ENCODE measurements at regions of chr4 and their contacts with region 1.

Region 1: DNA sequence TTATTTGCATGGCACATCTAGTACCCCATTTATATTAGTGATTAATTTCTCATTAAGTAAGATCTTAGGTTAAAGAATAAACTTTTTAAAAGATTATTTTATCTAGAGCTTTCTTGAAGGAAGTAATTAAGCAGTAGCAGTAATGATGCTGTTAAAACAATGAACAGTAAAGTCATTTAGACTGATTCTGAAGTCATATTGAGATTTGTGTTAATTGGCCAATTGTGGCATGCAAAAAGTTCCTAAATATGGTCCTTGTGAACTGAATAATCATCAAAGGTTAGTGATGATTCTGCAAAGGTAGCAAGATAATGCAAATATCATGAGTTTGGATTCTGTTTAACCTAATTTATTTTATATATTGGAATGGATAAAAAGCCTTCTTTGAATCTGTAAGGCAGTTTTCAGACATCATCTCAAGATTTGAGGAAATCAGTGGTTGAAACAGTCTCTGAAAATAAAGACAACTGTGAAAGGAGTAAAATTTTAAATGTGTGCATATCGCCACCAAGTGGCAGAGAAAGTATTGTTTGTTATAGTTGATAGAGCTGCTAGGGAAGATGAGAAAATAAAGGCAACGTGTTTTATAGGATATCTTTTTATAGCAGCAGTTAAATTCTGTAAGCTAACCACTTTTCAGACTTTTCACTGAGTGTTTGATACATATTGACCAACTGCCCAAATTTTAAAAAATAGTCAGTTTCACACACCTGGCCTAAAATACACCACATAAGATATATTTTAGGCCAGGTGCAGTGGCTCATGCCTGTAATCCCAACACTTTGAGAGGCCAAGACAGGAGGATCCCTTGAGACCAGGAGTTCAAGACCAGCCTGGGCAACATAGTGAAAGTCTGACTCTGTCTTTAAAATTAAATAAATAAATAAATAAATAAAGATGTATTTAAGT is 79.6 kb downstream of the CCKAR start:
- DNase-seq: peak; percentile 68
- ATAC-seq: peak; percentile 21
- H3K4me3 ChIP-seq: no peak overlapping the region
- H3K4me3 Mint-ChIP-seq: no peak overlapping the region
- H3K27ac ChIP-seq: no peak overlapping the region
- H3K27ac Mint-ChIP-seq: no peak overlapping the region
- H3K4me1 ChIP-seq: no peaks in the 10 kb centered on the region
- H3K4me1 Mint-ChIP-seq: no peaks in the 10 kb centered on the region
- H3K27me3 ChIP-seq: no peaks in the 10 kb centered on the region
- H3K27me3 Mint-ChIP-seq: no peaks in the 10 kb centered on the region
- CTCF ChIP-seq: peak; percentile 81

Region 2: DNA sequence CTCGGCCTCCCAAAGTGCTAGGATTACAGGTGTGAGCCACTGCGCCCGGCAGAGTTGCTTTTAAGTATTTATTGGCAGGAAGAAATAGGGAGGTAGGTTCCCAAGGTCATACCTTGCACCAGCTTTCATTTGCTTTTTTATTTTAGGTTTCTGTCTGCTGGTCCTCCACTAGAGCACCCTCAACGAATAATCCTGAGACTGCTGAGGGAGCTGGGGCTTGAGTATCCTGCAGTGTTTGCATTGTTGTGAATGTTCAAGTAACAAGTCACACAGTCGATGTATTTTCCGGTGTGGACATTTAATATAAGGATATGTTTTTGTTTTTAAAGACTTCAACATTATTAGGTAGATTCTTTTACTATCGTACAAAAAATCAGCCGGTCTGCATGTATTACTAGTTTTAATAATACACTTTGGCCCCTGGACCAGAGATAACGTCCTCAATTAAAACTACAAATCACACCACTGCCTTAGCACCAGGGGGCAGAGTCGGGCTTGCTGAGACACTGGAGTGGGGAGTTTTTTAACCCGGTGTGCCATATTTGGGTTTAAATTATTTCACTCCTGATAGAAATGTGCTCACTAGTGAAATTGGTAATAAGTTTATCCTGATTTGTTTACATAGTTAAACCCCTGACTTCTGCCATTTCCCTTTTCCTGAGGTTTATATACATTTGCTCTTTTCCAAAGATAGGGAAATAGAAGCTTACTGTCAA is 485.0 kb before region 1 on chr4:
- CTCF ChIA-PET with region 1: interaction called, 18 read pairs
- POLR2A ChIA-PET with region 1: no interaction called
- intact Hi-C with region 1: loop called (anchors 1 kb)
- DNase-seq: peak; percentile 59
- ATAC-seq: peak; percentile 28
- H3K4me3 ChIP-seq: no peak overlapping the region
- H3K4me3 Mint-ChIP-seq: no peak overlapping the region
- H3K27ac ChIP-seq: no peak overlapping the region
- H3K27ac Mint-ChIP-seq: no peak overlapping the region
- H3K4me1 ChIP-seq: peaks cover 0 to 2% of the 10 kb centered on the region in 2 donors
- H3K4me1 Mint-ChIP-seq: peaks cover 7% of the 10 kb centered on the region
- H3K27me3 ChIP-seq: no peaks in the 10 kb centered on the region
- H3K27me3 Mint-ChIP-seq: no peaks in the 10 kb centered on the region
- CTCF ChIP-seq: peak; percentile 70

Region 3: DNA sequence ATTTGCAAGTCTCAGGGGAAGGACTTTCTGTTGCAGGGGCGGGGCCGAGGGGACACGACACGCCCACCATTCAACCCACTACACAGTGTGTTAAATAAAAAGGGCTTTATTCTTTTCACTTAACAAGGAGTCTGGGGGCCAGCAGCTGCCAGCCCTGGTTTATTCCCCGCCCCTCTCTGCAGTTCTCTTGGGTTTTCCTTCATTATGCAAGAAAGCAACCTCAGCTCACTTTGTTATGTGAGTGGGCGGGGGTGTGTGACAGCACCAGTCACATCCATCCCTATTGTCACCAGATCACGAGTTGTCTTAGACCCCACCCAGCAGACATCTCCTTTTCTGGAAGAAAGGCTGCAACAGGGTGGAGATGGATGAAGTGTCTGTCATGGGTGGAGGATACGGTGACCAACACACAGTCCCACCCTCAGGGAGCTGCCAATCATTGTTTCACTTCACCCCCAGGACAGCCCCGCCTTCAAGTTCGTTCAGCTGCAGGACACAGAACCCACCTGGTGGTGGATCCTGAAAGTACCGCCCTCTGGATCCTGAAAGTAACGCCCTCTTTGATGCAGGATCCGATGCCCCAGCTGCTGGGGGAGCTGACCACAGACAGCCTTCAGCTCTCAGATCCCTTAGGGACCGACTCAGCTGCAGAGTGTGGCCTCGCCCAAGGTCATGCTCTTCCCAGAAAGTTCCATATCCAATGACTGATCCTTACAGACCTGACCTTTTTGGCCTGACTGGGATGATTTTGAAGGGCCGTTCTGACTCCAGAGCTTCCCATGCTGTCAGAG is 417.0 kb before region 1 on chr4:
- CTCF ChIA-PET with region 1: interaction called, 54 read pairs
- POLR2A ChIA-PET with region 1: no interaction called
- intact Hi-C with region 1: loop called (anchors 1 kb)
- DNase-seq: peak; percentile 33
- ATAC-seq: peak; percentile 39
- H3K4me3 ChIP-seq: no peak overlapping the region
- H3K4me3 Mint-ChIP-seq: no peak overlapping the region
- H3K27ac ChIP-seq: no peak overlapping the region
- H3K27ac Mint-ChIP-seq: no peak overlapping the region
- H3K4me1 ChIP-seq: peaks cover 0 to 5% of the 10 kb centered on the region in 2 donors
- H3K4me1 Mint-ChIP-seq: peaks cover 8% of the 10 kb centered on the region
- H3K27me3 ChIP-seq: peaks cover 0 to 2% (median 0%) of the 10 kb centered on the region in 4 experiments
- H3K27me3 Mint-ChIP-seq: peaks cover 5% of the 10 kb centered on the region
- CTCF ChIP-seq: peak; percentile 31

Region 4: GRCh38 chr4:26081795-26082498 is 328.7 kb before region 1 on chr4:
- CTCF ChIA-PET with region 1: interaction called, 31 read pairs
- POLR2A ChIA-PET with region 1: no interaction called
- intact Hi-C with region 1: loop called (anchors 1 kb)
- DNase-seq: peak; percentile 56
- ATAC-seq: peak; percentile 41
- H3K4me3 ChIP-seq: no peak overlapping the region
- H3K4me3 Mint-ChIP-seq: no peak overlapping the region
- H3K27ac ChIP-seq: no peak overlapping the region
- H3K27ac Mint-ChIP-seq: no peak overlapping the region
- H3K4me1 ChIP-seq: no peaks in the 10 kb centered on the region
- H3K4me1 Mint-ChIP-seq: peaks cover 8% of the 10 kb centered on the region
- H3K27me3 ChIP-seq: peaks cover 0 to 10% (median 0%) of the 10 kb centered on the region in 4 experiments
- H3K27me3 Mint-ChIP-seq: peaks cover 5% of the 10 kb centered on the region
- CTCF ChIP-seq: peak; percentile 78

Measured in B cell (primary cell).